ENCODE measurements at regions of chr9 and their contacts with region 1.

Region 1: DNA sequence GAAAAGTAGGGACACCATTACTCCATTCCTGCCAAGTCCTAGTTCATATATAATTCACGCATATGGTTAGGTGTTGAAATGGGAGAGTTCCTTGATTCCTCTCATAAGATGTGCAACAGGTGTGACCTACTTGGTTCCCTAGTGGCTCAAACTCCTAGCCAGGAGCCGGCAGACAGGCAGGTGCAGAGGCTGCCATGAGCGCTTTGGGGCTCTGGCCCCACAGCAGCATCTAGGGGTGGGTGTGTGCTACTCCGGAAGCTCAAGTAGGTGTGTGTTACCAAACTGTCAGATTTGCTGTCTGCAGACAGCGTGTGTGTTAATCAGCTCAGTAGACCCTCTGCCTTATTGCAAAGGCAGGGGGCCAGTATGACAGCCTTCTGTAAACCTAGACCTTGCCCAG is 1652.4 kb upstream of the ACO1 start:
- DNase-seq: peak; percentile 2
- ATAC-seq: peak; percentile 90
- H3K4me3 ChIP-seq: no peak overlapping the region
- H3K27ac ChIP-seq: no peak overlapping the region
- H3K4me1 ChIP-seq: no peaks in the 10 kb centered on the region
- H3K27me3 ChIP-seq: no peaks in the 10 kb centered on the region
- CTCF ChIP-seq: peak; percentile 35
- EP300 ChIP-seq: no peak
- POLR2A ChIP-seq: no peak
- RAD21 ChIP-seq: no peak

Region 2: DNA sequence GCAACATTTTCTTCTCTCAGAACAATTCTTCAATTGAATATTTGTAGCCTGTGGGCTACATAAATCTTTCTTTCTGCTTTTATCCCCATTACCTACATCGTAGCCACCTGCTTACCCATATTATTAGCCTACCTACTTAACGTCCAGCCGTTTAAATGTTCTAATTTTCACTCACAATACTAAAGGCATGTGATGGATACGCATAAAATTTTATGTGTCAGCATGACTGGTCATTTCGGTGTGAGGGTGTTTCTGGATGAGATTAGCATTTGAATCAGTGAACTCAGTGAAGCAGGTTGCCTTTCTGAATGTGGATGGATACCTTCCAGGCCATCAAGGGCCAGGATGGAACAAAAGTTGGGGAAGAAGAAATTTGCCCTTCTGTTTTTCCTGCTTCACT is 70.1 kb before region 1 on chr9:
- CTCF ChIA-PET with region 1: no interaction called
- POLR2A ChIA-PET with region 1: no interaction called
- in situ Hi-C with region 1: no loop called
- intact Hi-C with region 1: no loop called
- DNase-seq: no peak
- ATAC-seq: no peak
- H3K4me3 ChIP-seq: no peak overlapping the region
- H3K27ac ChIP-seq: no peak overlapping the region
- H3K4me1 ChIP-seq: no peaks in the 10 kb centered on the region
- H3K27me3 ChIP-seq: no peaks in the 10 kb centered on the region
- CTCF ChIP-seq: no peak
- EP300 ChIP-seq: no peak
- POLR2A ChIP-seq: no peak
- RAD21 ChIP-seq: no peak

Region 3: DNA sequence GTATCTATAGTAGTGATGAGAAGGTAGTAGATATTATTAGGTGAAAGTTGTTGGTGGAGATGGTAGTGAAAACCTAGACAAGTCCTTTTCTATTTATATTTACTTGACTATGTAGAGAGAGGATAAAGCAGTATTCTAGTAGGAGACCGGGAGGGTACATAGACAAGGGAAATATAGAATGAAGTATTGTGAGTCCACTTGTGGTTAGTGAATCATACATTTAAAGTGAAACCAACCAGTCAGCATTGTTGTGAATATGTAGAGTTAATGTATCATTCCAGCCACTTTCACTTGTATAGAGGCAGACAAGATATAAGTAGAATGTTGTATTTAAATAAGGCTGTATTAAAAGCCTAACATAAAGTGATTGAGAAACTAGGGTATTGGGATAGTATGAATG is 58.9 kb before region 1 on chr9:
- CTCF ChIA-PET with region 1: no interaction called
- POLR2A ChIA-PET with region 1: no interaction called
- in situ Hi-C with region 1: loop called (anchors 10 kb)
- intact Hi-C with region 1: no loop called
- DNase-seq: no peak
- ATAC-seq: no peak
- H3K4me3 ChIP-seq: no peak overlapping the region
- H3K27ac ChIP-seq: no peak overlapping the region
- H3K4me1 ChIP-seq: no peaks in the 10 kb centered on the region
- H3K27me3 ChIP-seq: no peaks in the 10 kb centered on the region
- CTCF ChIP-seq: no peak
- EP300 ChIP-seq: no peak
- POLR2A ChIP-seq: no peak
- RAD21 ChIP-seq: no peak

Measured in HepG2 (cell line).